AG04449 (cell line): ENCODE measurements at regions of chr4 and their contacts with region 1.

Region 1: DNA sequence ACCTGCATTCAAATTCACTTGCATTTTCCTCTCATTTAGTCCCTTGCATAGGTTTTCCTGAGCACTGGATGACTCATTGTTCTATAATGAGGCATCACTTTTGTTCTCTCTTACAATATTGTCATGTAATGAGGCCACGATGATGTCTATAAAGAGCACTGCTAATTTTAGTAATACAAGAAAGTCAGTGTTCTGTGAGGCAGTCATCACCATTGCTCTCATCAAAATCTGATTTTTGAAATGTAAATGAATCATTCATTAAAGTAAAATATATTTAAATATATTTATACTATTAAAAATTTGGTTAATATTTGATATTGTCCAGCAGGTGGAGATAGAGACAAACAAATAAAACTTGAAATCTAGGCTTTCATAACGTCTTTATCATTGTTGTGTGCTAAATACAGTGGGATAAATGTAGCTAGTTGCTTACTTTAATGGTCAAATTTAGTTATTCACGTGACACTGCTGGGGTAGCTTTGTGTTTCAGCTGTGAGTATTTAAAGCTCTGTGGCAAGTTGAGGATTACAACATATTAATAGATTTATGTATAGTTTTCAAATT is 15.4 kb downstream of the HMGB2 start:
- DNase-seq: no peak
- H3K4me3 ChIP-seq: no peak overlapping the region
- CTCF ChIP-seq: no peak

Region 2: DNA sequence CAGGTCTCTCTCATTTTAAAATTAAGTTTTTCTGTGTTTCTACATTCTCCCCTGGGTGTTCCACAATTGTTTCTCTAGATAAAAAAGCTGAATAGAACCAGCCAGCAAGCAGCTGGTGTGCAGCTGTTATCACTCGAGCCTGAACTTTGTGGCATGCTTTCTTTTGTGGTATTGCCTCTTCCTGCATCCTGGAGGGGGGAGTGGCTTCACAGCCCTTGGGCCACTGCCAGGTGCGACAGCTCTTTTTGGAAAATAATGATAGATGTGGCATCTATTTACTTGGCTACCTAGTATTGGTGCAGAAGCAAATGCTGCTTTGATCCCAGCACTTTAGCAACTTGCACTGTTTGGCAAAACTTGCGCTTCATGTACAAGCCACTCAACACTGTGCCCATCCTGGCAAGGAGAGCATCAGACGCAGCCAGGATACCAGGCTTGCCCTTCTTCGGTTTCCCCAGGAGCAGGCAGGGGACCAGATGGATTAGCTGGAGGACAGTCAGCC is 54.0 kb before region 1 on chr4:
- CTCF ChIA-PET with region 1: no interaction called
- POLR2A ChIA-PET with region 1: no interaction called
- DNase-seq: no peak
- H3K4me3 ChIP-seq: no peak overlapping the region
- CTCF ChIP-seq: no peak

Region 3: DNA sequence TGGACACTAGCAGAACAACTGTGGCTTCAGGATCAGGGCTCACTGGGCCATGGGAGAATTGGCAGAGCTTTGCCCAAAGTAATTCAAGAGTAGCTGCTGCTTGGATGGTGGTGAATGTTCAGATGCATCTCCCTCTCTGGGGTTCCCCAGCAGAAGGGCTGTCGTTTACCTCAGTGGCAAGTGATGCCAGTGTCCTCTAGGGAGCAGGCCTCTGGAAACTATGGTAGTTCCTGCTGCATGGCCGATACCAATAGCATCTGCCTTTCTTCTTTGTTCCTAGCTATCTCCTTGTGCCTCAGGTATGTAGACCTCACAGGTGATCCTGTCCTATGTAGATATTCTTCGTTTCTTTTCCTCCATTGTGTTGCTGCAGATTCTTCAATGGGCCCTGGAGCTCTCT is 11.0 kb before region 1 on chr4:
- CTCF ChIA-PET with region 1: interaction called, 36 read pairs
- POLR2A ChIA-PET with region 1: no interaction called
- DNase-seq: no peak
- H3K4me3 ChIP-seq: no peak overlapping the region
- CTCF ChIP-seq: no peak

Region 4: DNA sequence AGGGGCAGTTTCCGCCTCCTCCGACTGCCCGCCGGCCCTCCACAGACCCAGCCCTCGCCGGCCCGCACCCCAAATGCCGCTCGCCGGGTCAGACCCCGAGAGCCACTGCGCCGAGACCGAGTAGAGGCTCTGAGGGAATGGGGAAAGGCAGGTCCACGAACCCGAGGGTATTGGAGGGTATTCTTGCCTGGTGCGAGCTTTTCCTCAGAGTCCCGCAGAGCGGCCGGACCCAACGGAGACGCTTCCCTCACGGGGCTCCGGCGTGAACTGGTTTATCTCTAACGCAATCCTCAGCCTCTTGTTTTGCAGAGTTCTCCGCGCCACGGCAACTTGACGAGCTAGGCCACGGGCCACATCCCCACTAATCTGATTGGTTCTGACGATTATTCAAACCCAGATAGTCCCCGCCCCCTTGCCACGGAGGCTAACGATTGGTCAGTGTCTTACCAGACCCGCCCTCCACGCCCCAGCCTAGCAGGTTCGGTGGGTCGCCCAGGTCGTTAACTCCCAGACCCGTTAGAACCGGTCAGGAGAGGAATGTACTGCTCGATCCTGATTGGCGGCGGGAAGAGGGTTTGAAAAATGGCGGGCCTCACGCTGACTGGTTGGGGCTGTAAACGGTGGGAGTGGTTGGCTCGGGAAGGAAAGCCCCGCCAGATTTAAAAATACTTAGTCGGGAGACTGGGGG is 15.5 kb after region 1 on chr4 and contains the start of gene HMGB2:
- CTCF ChIA-PET with region 1: interaction called, 68 read pairs
- POLR2A ChIA-PET with region 1: interaction called, 3 read pairs
- DNase-seq: peak; percentile 100
- H3K4me3 ChIP-seq: peak within 1 kb of the TSS; percentile 98
- CTCF ChIP-seq: no peak

Region 5: GRCh38 chr4:173360587-173361221 is 42.0 kb after region 1 on chr4:
- CTCF ChIA-PET with region 1: interaction called, 67 read pairs
- POLR2A ChIA-PET with region 1: no interaction called
- DNase-seq: no peak
- H3K4me3 ChIP-seq: no peak overlapping the region
- CTCF ChIP-seq: peak; percentile 26

Region 6: DNA sequence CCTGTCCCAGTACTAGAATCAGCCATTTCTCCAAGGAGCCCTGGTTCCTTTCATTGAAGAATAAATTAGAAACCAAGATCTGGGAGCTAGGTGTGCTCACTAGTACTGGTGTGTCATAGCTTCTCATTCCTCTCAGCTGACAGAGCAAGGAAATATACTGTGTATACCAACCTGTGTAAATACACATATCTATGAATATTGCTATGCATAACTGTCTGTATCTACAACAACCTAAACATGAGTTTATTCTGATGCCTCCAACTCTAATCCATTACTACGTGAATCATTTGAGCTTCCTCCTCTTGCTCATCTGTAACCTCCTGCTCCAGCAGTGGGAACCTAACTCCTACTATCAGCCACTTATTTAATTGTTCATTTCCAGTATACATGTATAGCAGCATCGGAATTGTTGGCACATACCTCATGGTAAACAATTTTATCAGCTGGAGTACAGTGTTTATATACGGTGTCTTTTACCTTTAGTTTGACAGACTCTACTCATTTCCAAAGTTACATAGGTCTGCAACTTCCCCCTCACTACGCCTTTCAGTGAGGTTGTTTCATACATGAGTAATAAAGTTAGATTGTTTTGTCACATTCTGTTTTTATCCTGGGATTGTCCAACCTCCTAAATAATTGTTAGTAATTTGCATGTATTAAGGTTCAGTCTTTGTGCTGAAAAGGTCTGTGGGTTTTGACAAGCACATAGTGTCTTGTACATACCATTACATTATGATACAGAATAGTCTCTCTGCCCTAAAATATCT is 87.3 kb after region 1 on chr4:
- CTCF ChIA-PET with region 1: interaction called, 464 read pairs
- POLR2A ChIA-PET with region 1: no interaction called
- DNase-seq: no peak
- H3K4me3 ChIP-seq: no peak overlapping the region
- CTCF ChIP-seq: no peak

Region 7: DNA sequence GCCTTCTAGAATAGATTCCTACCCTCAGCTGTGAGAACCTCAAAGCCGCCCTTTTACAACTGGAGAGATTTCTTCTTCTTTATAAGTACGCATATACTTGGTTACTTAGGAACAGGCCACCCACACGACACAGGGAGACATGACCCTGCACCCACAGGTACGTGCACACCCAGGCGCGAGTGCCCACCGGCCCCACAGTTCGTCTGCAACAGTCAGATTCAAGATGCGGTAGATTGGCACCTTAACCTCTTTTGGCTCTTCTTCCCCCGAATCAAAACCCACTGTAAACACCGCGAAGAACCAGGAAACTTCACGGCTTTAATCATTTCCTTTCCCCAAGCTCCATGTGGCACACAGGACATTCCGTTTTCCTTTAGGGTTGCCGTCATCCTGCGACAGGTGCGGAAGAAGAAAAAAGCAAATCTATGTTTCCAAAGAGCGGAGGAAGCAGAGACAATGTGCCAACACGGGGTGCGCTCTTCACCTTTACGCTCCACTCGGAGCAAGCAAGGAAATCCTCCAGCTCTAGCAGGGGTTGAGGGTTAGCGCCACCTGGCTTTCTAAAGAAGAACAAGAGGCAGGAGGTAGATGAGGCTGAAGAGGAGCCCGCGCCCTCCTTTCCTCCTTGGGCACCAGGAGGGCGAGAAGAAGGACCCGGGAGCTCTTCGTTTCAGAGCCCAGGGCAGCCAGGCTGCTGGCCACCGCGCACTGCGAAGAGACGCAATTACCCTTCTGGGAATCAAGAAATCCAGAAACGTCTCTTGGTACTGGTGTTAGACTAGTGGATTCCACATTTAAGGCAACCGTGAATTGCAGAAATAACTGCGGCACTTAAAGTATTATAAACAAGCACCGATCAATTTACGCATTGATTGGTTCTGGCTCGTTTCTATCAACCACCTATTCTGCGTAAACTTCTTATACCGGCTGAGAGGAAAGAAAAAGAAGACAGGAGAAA is 175.6 kb after region 1 on chr4:
- CTCF ChIA-PET with region 1: interaction called, 17 read pairs
- POLR2A ChIA-PET with region 1: no interaction called
- DNase-seq: no peak
- H3K4me3 ChIP-seq: peak overlapping the region; percentile 31
- CTCF ChIP-seq: peak; percentile 85